HCT116 (cell line): ENCODE measurements at regions of chr9 and their contacts with region 1.

Region 1: DNA sequence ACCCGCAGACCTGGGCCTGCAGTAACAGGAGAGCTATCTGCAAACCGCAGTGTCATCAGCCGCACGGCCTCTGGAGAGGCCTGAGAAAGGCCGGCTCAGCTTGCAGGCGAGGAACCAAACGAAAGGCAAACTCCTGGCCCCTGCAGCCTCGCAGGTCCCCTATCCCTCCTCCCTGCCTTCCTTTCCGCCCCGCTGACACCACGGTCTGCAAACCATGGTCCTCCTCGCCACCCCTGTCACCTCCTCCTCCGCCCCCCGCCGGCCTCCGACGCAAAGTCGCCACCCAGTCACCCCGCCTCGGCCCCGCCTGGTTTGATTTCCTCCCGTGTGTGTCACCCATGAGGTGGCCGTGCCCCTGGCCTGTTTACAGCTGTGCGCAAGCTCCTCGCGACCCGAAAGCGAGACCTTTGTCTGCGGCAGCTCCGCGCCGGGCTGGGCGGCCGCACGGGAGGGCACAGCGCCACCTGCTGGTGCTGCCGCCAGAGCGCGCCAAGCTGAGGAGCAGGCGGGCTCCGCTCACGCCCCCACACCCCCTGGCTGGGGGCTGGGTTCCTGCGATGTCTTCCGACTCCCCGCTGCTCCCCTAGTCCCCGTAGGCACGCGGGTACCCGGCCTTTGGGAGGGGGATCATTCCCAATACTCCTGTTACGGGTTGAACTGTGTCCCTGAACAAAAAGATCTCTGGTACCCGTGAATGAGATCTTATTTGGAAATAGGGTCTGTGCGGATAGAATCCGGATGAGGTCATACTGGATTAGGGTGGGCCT is 19.4 kb downstream of the GBGT1 start:
- DNase-seq: no peak
- ATAC-seq: peak; percentile 48
- H3K4me3 ChIP-seq: peak overlapping the region; percentile 16 to 19; a peak in 3 of 4 replicates
- H3K27ac ChIP-seq: peak overlapping the region; percentile 38; the same call in 1 of the 2 replicates
- H3K4me1 ChIP-seq: peaks cover 14 to 50% of the 10 kb centered on the region in 2 experiments
- H3K27me3 ChIP-seq: no peaks in the 10 kb centered on the region
- CTCF ChIP-seq: peak in 2 of 3 experiments; percentile 97; a peak in 4 of 6 replicates
- POLR2A ChIP-seq: no peak
- RAD21 ChIP-seq: no peak

Region 2: DNA sequence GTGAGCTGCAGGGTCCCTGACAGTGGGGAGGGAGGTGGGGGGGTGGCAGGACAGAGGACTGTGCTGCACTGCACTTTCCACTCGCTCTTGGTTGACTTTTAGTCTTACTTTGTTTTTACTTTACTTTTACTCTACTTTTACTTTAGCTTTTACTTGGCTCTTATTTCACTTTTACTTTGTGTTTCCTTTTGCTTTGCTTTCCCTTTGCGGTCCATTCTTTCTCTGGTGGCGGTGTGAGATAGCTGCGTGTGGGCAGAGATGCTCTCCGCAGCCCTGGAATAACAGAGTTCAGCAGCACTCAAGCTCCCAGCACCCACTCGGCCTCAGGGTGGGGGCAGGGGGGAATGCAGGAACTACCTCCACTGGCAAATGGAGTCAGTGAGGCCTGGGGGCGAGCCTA is 270.9 kb before region 1 on chr9:
- CTCF ChIA-PET with region 1: no interaction called
- POLR2A ChIA-PET with region 1: no interaction called
- RAD21 ChIA-PET with region 1: no interaction called
- intact Hi-C with region 1: no loop called
- DNase-seq: no peak
- ATAC-seq: no peak
- H3K4me3 ChIP-seq: no peak overlapping the region
- H3K27ac ChIP-seq: no peak overlapping the region
- H3K4me1 ChIP-seq: peaks cover 7 to 8% of the 10 kb centered on the region in 2 experiments; a peak in 2 of 4 replicates
- H3K27me3 ChIP-seq: no peaks in the 10 kb centered on the region
- CTCF ChIP-seq: no peak
- POLR2A ChIP-seq: no peak
- RAD21 ChIP-seq: no peak

Region 3: DNA sequence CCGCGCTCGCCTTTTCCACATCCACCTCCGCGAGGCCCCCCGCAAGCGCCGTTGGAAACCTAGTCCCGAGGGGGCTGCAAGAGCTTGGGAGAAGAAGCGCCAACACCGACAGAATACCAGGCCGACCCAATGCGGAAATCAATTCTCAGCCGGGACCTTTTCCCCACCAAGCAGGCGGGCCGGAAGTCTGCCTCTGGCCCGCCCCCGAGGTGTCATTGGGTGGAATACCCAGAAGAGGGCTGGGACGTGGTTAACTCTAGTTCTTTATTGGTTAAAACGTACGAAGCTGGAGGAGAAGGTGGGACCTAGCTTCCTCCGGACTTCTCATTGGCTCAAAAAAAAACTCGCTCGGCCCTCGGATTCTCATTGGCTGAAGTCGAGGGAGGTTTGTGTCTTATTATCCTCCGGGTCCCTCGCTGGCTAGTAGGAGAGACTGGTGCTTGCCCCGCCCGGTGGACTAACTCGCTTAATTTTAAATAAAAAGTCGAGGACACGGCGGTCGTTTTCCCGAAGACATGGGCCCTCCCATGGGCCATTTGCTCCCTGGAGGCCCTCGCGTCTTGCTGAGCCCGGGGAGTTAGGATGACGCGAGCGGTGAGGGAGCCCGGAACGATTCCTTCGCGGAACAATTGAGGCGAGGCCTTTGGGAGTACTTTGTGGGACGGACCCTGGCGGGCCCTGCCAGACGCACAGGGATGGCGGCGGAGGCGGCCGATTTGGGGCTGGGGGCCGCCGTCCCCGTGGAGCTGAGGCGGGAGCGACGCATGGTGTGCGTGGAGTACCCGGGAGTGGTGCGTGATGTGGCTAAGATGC is 113.8 kb before region 1 on chr9 and contains the start of gene GTF3C5:
- CTCF ChIA-PET with region 1: interaction called, 11 read pairs
- POLR2A ChIA-PET with region 1: interaction called, 3 read pairs
- RAD21 ChIA-PET with region 1: no interaction called
- intact Hi-C with region 1: no loop called
- DNase-seq: peak; percentile 99
- ATAC-seq: peak; percentile 96
- H3K4me3 ChIP-seq: peak within 1 kb of the TSS; percentile 78 to 98
- H3K27ac ChIP-seq: peak within 1 kb of the TSS; percentile 82
- H3K4me1 ChIP-seq: peaks cover 3 to 17% of the 10 kb centered on the region in 2 experiments; a peak in 3 of 4 replicates
- H3K27me3 ChIP-seq: no peaks in the 10 kb centered on the region
- CTCF ChIP-seq: no peak
- POLR2A ChIP-seq: peak; percentile 44
- RAD21 ChIP-seq: no peak
- total RNA-seq, gene GTF3C5: 95.1 TPM

Region 4: DNA sequence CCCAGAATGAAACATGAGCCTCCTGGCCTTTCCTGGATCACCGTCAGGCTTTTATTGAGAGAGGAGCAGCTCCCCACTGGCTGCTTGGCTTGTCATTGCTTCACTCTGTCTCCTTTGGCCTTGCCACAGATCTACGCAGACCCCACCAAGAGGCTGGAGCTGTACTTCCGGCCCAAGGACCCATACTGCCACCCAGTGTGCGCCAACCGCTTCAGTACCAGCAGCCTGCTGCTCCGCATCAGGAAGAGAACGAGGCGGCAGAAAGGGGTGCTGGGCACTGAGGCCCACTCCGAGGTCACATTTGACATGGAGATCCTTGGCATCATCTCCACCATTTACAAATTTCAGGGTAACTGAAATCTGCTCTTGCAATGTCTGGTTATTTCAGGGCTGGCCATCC is 102.4 kb before region 1 on chr9:
- CTCF ChIA-PET with region 1: interaction called, 5 read pairs
- POLR2A ChIA-PET with region 1: no interaction called
- RAD21 ChIA-PET with region 1: interaction called in 1 of 2 experiments, 3 read pairs
- intact Hi-C with region 1: loop called (anchors 2 kb)
- DNase-seq: no peak
- ATAC-seq: no peak
- H3K4me3 ChIP-seq: no peak overlapping the region
- H3K27ac ChIP-seq: no peak overlapping the region
- H3K4me1 ChIP-seq: no peaks in the 10 kb centered on the region
- H3K27me3 ChIP-seq: no peaks in the 10 kb centered on the region
- CTCF ChIP-seq: no peak
- POLR2A ChIP-seq: no peak
- RAD21 ChIP-seq: no peak

Region 5: DNA sequence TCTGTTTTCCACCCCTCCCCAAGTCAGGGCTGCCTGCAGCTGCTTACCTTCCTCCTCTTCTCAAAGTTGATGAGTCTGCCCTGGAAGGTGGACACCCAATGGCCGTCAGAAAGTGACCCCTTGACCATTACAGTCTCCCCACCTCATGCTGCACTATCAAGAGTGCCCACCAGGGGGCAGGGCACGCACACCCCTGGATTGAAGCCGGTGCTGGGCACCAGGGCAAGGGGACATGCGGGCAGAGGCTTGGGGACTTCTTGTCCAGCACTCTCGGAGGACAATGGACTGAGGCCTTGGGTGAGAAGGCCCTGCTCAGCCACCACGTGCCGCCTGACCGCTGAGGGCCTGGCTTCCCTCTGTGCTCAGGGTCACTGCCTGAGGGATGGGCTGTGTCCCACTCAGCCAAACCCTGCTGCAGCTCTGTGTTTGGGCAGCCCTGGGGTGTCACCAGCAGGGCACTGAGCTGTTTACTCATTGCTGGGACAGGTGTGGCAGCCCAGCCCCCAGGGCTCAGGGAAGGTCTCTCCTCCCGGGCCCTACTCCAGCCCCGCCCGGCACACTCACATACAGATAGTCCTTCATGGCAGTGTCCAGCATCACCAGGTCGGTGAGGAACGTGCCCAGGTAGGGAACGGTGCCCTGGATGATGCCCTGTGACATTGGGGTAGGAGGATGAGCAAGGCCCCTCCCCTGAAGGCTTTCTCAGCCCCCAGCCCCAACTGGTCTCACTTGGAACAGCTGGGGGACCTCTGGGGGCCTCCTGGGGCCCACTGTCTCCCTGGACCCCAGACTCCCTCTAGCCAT is 40.9 kb before region 1 on chr9:
- CTCF ChIA-PET with region 1: interaction called, 21 read pairs
- POLR2A ChIA-PET with region 1: no interaction called
- RAD21 ChIA-PET with region 1: interaction called in 1 of 2 experiments, 3 read pairs
- intact Hi-C with region 1: loop called (anchors 1 kb)
- DNase-seq: no peak
- ATAC-seq: peak; percentile 83
- H3K4me3 ChIP-seq: no peak overlapping the region
- H3K27ac ChIP-seq: peak overlapping the region; percentile 11; the same call in 1 of the 2 replicates
- H3K4me1 ChIP-seq: no peaks in the 10 kb centered on the region
- H3K27me3 ChIP-seq: no peaks in the 10 kb centered on the region
- CTCF ChIP-seq: peak; percentile 88 to 98 (median 91)
- POLR2A ChIP-seq: no peak
- RAD21 ChIP-seq: peak; percentile 97

Region 6: DNA sequence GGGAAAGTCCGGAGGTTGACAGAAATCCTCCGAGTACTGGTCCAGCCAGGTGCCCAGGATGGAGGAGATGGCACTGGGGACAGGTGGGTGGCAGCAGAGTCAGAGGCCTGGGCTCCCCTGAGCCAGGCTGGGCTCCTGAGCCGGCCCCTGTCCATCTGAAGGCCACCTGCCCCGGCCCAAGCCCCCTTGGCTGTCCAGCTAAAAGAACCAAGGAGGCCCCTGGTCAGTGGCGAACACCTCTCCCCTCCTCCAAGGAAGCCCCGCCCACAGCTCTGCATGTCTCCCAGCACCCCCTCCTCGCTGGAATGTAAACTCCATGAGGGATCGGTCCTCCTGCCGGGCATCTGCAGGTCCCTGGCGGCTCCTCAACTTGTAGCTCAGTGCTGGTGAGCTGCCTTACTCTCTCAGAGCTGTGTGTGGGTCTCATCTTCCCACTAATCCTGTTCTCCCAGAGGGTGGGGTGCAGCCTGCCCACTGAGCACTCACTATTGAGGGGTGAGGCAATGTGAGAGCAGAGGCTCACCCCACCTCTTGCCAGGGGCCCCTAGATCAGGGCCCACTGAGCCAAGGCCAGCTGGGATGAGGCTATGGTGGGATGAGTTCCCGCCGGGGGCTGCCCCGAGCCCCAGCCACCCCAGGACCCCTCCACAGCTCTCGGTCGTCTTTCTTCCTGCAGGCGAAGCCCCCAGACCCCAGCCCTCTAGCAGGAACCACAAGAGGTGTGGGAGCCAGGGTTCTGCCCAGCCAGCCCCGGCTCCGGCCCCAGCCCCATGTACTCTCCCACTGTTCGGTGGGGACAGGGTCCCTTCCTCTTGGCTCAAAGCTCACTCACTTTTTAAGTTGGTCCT is 35.3 kb before region 1 on chr9:
- CTCF ChIA-PET with region 1: interaction called, 21 read pairs
- POLR2A ChIA-PET with region 1: no interaction called
- RAD21 ChIA-PET with region 1: interaction called in 1 of 2 experiments, 3 read pairs
- intact Hi-C with region 1: no loop called
- DNase-seq: no peak
- ATAC-seq: no peak
- H3K4me3 ChIP-seq: no peak overlapping the region
- H3K27ac ChIP-seq: no peak overlapping the region
- H3K4me1 ChIP-seq: no peaks in the 10 kb centered on the region
- H3K27me3 ChIP-seq: no peaks in the 10 kb centered on the region
- CTCF ChIP-seq: no peak
- POLR2A ChIP-seq: no peak
- RAD21 ChIP-seq: no peak

Region 7: DNA sequence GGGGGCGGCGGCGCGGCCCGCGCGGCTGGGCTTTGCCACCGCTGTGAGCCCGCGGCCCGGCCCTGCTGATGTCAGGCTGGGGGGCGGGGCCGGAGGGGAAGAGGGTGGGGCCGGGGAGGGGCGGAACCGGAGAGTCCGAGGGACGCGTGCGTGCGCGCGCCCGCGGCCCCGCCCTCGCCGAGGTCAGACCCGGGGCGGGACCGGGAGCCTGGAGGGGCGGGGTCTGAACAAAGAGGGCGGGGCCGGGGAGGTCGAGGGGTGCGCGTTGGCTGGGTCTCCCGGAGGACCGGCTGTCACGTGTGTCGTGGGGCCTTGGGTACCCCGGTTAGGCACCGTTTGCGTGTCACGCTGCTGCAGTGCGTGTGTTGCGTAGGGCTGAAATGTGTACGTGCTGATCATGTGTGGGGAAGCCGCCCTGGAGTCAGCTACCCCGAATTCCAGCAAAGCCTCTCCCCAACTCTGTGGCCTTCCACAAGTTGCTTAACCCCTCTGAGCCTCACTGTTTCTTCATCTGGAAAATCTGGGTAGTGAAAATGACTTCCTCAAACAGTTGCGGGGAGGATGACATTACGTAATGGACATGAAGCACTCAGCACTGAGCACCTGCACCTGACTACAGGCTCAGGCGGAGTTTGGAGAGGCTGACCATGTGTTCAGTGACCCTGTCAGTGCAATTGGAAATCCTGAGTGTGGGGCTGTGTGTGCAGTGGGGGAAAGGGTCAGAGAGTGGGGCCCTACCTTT is 23.0 kb before region 1 on chr9 and contains the start of gene RALGDS:
- CTCF ChIA-PET with region 1: interaction called, 20 read pairs
- POLR2A ChIA-PET with region 1: no interaction called
- RAD21 ChIA-PET with region 1: interaction called in 1 of 2 experiments, 3 read pairs
- intact Hi-C with region 1: loop called (anchors 2 kb)
- DNase-seq: peak; percentile 56
- ATAC-seq: peak; percentile 87
- H3K4me3 ChIP-seq: peak within 1 kb of the TSS; percentile 62 to 80
- H3K27ac ChIP-seq: peak within 1 kb of the TSS; percentile 79
- H3K4me1 ChIP-seq: peaks cover 10 to 37% of the 10 kb centered on the region in 2 experiments
- H3K27me3 ChIP-seq: no peaks in the 10 kb centered on the region
- CTCF ChIP-seq: no peak
- POLR2A ChIP-seq: no peak
- RAD21 ChIP-seq: no peak
- total RNA-seq, gene RALGDS: 36.1 TPM

Region 8: DNA sequence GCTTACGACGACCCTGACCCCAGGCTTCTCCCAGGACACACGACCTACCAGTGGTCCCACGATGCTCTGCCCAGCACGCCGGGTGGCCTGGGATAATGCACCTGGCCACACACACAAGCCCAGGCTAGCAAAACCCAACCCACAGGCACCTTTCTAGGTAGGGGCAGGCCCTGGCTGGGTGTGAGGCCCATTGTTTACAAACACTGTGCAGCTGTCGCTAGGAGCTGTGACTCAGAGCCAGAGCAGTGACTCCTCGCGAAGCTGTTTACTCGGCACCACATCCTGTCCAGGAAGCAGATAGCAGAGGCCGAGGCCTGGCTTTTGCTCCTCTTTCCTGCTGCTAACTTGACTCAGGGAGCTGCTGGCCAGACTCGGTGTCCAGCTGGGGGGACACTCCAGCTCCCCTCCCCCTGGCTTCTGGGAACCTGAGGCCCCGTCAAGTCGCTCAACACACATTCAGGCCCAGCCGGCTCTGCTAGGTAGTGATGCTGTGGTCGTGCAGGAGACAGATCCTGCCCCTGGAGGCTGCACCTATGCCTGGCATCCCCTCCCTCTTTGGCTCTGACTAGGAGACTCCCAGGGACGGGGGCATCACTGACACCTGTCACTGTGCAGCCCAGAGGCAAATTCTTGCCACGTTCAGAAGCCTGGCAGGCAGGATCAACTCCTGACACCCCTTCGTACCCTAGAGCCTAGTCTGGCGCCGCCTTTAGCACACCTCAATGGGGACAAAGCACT is 10.5 kb before region 1 on chr9:
- CTCF ChIA-PET with region 1: interaction called, 61 read pairs
- POLR2A ChIA-PET with region 1: interaction called, 4 read pairs
- RAD21 ChIA-PET with region 1: interaction called, 3 to 4 read pairs
- intact Hi-C with region 1: no loop called
- DNase-seq: peak; percentile 89
- ATAC-seq: peak; percentile 79
- H3K4me3 ChIP-seq: peak overlapping the region; percentile 11 to 21; a peak in 2 of 4 replicates
- H3K27ac ChIP-seq: peak overlapping the region; percentile 82
- H3K4me1 ChIP-seq: peaks cover 42 to 68% of the 10 kb centered on the region in 2 experiments
- H3K27me3 ChIP-seq: no peaks in the 10 kb centered on the region
- CTCF ChIP-seq: peak in 1 of 3 experiments; percentile 15; a peak in 1 of 6 replicates
- POLR2A ChIP-seq: no peak
- RAD21 ChIP-seq: no peak